ENCODE measurements at regions of chr19 and their contacts with region 1.

Region 1: DNA sequence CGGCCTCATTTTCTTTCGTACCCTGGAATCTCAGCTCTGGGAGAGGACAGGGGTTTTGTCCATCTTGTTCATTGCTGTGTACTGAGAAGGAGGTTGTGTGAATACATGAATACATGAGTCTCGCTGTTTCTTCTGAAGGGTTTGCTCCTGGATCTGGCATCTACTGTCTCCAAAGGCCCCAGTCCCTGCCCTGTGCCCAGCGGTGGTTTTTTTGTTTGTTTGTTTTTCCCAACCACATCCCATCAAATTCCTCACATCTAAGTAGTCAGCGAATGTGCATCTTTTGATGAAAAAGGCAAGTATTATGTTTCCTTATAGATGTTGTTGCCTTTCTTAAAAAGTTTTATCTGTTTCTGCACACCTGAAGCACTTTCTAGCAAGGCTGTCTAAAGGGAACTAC is 12.5 kb downstream of the DCAF15 start:
- DNase-seq: no peak
- H3K4me3 Mint-ChIP-seq: no peak overlapping the region
- H3K27ac Mint-ChIP-seq: no peak overlapping the region
- H3K4me1 Mint-ChIP-seq: no peaks in the 10 kb centered on the region
- H3K27me3 Mint-ChIP-seq: no peaks in the 10 kb centered on the region

Region 2: GRCh38 chr19:14048443-14049153 is 83.8 kb after region 1 on chr19:
- intact Hi-C with region 1: loop called (anchors 5 kb)
- DNase-seq: peak; percentile 60
- H3K4me3 Mint-ChIP-seq: no peak overlapping the region
- H3K27ac Mint-ChIP-seq: no peak overlapping the region
- H3K4me1 Mint-ChIP-seq: peaks cover 7% of the 10 kb centered on the region
- H3K27me3 Mint-ChIP-seq: no peaks in the 10 kb centered on the region

Measured in activated T-helper 1 cell treated with anti-CD3 and anti-CD28 coated beads, Interleukin-12 subunit alpha, Interleukin-12 subunit beta, Interleukin-2, Interleukin-4 antibody, amounts not matched to agents 30 ng/mL and 10 ng/mL and 1 ng/mL, durations not matched to agents 14 hours and 24 hours and 36 hours (primary cell).